Posterior cingulate gyrus (tissue), 11 donors: ENCODE measurements at regions of chr16 and their contacts with region 1.

Region 1: DNA sequence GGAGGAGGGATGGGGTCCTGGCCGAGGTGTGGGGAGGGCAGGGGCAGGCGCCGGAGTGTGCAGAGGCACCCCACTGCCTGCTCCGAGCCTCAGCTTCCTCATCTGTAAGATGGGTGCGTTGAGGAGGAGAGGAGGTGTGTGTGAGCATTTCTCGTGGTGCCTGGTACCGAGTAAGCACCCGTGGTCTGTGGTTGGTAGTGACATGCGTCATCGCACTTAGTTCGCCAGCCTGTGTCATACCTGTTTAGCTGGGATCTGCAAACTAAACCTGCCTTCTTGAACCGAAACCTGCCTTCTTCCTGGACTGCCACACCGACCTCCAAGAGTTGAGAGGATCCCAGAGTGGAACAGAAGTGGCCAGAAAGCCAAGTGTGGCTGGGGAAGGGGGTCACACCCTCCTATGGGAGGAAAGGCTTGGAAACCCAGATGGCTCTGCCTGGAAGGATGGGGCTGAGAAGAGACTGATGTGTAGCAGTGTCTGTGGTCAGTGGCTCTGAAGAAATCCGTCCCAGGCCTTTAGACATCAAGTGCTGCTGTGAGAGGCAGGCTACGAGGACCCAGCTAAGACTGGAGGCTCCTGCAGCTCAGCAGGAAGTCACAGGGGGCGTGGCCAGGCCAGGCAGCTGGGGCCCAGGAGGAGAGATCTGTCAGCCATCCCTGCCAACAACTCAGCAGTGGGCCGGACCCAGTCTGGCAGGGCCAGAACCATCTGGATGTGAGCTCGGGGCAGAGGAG is 162.6 kb upstream of the PLCG2 start:
- DNase-seq: peak in 8 of 10 donors; percentile 47 to 94 (median 65)

Region 2: DNA sequence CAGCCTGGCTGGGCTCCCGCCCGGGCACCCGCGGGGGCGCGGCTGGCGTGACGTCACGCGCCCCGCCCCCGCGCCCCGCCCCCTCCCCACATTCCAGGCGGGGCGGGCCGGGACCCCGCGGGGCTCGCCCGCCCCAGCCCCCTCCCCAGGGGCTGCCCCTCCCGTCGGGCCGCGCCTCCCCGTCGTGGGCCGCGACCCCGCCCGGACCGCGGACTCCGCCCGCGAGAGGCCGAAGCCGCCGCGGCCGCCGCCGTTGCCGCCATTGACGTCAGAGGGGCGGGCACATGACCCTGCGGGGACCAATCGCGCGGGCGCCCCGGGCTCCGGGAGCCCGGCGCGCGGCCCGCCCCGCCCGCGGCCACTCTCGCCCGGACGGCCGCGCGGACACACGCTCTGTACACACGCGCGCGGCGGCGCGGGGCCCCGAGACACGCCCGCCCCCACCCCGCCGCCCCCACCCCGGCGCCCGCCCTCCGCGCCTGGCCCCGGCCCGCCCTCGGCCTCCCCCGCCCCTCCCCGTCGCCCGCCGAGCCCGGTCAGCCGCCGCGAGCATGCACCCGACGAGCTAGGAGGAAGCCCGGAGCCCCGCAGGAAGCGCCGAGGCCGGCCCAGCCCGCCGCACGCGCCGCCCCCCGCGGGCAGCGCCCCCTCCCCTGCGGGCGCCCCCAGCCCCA is 171.9 kb before region 1 on chr16 and contains the start of gene CMIP:
- intact Hi-C with region 1: loop called (anchors 10 kb)
- DNase-seq: peak; percentile 64 to 97 (median 76)

Region 3: DNA sequence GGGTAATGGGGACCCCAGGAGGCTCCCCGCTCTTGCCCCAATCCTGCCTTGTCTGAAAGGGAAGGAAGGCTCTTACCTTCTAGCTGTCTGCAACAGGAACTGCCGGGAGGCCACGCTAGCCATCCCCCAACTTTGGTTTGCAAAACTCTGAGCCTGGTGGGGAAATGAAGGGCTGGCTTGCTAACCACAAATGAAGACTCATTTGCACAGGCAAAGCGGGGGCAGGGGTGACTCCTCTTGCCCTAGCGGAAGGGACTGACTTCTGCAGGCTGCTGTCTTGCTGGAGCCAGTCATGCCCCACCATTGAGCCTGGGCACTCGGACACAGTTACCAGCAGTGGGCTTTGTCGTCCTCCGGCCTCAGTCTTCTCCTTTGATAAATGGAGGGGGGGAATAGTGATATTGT is 215.2 kb after region 1 on chr16:
- intact Hi-C with region 1: no loop called
- DNase-seq: peak in 7 of 10 donors; percentile 5 to 91 (median 38)